Calu3 (cell line): ENCODE measurements at regions of chr12 and their contacts with region 1.

Region 1: GRCh38 chr12:38053655-38054464 is 262.7 kb upstream of the ALG10B start:
- DNase-seq: peak; percentile 85
- H3K4me3 Mint-ChIP-seq: peak overlapping the region; percentile 19
- H3K27ac Mint-ChIP-seq: no peak overlapping the region
- H3K4me1 Mint-ChIP-seq: peaks cover 18% of the 10 kb centered on the region
- H3K27me3 Mint-ChIP-seq: no peaks in the 10 kb centered on the region
- CTCF ChIP-seq: peak; percentile 67

Region 2: DNA sequence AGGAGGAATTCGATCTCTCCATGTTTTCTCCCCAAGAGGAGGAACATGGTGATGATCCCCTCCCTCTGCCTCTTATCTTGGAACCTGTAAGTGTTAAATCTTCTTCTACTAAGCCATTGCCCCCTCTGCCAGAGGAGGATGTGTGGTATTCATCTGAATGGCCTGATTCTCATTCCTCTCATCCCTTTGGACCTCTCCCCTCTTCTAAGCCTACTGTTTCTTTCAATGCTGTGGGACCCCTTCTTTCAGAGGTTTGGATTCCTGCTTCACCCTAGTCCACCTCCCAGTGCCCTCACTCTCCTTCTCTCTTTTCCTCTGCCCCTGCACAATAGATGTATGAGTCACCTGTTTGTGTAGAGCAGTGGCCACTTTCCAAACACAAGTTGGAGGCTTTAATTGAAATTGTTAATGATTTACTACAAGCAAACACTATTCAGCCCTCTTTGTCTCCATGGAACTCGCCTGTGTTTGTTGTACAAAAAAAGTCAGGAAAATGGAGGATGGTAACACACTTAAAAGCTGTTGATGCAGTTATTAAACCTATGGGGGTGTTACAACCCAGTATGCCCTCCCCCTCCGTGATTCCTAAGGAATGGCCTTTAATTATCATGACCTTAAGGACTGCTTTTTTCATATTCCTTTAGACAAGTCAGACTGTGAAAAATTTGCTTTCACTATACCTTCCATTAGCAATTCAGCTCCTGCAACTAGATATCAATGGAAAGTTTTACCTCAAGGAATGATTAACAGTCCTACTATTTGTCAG is 70.6 kb after region 1 on chr12:
- CTCF ChIA-PET with region 1: interaction called, 5 read pairs
- intact Hi-C with region 1: loop called (anchors 5 kb)
- DNase-seq: peak; percentile 46
- H3K4me3 Mint-ChIP-seq: peak overlapping the region; percentile 51
- H3K27ac Mint-ChIP-seq: peak overlapping the region; percentile 94
- H3K4me1 Mint-ChIP-seq: peaks cover 29% of the 10 kb centered on the region
- H3K27me3 Mint-ChIP-seq: no peaks in the 10 kb centered on the region
- CTCF ChIP-seq: no peak

Region 3: DNA sequence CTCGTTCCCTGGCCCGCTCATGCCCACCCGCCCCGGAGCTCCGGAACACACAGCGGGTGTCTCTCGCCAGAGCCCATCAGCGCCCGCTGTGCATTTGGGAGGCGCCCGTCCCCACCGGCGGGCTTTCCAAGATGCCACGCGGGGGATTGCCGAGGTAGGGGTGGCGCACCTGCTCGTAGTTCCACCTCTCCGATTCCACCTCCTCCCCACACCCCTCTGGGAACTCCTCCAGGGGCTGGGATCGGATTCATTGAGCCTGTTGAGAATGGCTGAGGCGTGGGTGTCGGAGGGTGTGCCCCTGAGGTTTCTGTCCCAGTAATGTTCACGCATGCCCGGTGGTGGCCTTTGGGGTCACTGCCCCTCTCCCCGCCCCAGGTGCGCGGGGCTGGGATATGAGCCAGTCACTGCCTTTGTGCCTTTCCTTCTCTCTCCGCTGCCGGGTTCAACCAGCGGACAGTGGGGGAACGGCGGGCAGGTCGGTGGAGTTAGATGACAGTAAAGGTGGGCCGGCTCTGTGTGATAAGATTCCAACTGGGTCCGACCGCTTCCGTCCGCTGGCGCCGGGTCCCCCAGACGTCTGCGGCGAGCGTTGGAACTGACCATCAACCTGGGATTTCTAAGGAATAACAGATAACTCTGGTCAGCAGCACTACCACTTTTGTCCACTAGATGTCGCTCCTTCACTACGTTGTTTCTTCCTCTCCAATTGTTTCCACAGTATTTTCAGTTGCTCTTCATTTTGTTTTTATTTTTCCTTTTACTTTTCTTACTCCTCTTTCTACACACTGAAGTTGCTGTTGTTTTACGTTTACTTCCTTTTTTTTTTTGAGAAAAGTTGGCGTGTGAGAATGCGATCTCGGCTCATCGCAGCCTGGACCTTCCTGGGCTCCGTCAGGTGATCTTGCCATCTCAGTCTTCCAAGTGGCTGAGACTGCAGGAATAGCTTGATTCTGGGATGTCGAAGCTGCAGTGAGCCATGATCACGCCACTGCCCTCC is 84.7 kb after region 1 on chr12:
- CTCF ChIA-PET with region 1: interaction called, 3 read pairs
- intact Hi-C with region 1: loop called (anchors 2 kb)
- DNase-seq: peak; percentile 80
- H3K4me3 Mint-ChIP-seq: peak overlapping the region; percentile 68
- H3K27ac Mint-ChIP-seq: peak overlapping the region; percentile 67
- H3K4me1 Mint-ChIP-seq: peaks cover 10% of the 10 kb centered on the region
- H3K27me3 Mint-ChIP-seq: no peaks in the 10 kb centered on the region
- CTCF ChIP-seq: peak; percentile 57

Region 4: DNA sequence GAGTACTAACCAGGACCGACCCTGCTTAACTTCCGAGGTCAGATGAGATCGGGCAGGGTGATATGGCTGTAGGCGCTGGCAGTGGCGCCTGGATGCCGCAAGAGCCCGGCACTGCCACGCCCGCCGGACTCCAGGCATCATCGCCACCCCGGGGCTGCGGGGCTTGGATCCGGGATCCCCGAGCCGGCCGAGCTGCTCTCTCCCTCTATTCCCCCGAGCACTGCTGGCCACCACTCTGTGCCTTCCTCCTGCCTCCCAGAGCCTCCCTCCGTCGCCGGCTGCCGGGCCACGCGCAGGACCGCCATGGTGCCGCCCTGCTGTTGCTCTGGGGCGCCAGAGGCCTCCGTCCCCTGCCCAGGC is 109.6 kb after region 1 on chr12:
- CTCF ChIA-PET with region 1: no interaction called
- intact Hi-C with region 1: no loop called
- DNase-seq: no peak
- H3K4me3 Mint-ChIP-seq: no peak overlapping the region
- H3K27ac Mint-ChIP-seq: no peak overlapping the region
- H3K4me1 Mint-ChIP-seq: no peaks in the 10 kb centered on the region
- H3K27me3 Mint-ChIP-seq: no peaks in the 10 kb centered on the region
- CTCF ChIP-seq: no peak

Region 5: GRCh38 chr12:38316391-38317129 is 262.7 kb after region 1 on chr12 and contains the start of gene ALG10B:
- CTCF ChIA-PET with region 1: no interaction called
- intact Hi-C with region 1: loop called (anchors 1 kb)
- DNase-seq: peak; percentile 89
- H3K4me3 Mint-ChIP-seq: peak within 1 kb of the TSS; percentile 86
- H3K27ac Mint-ChIP-seq: peak within 1 kb of the TSS; percentile 86
- H3K4me1 Mint-ChIP-seq: peaks cover 21% of the 10 kb centered on the region
- H3K27me3 Mint-ChIP-seq: no peaks in the 10 kb centered on the region
- CTCF ChIP-seq: no peak
- total RNA-seq, gene ALG10B: 11.2 and 12.6 TPM in 2 replicates

Region 6: GRCh38 chr12:38906482-38907170 is 852.8 kb after region 1 on chr12:
- CTCF ChIA-PET with region 1: no interaction called
- intact Hi-C with region 1: loop called (anchors 10 kb)
- DNase-seq: peak; percentile 88
- H3K4me3 Mint-ChIP-seq: peak overlapping the region; percentile 90
- H3K27ac Mint-ChIP-seq: peak overlapping the region; percentile 72
- H3K4me1 Mint-ChIP-seq: peaks cover 8% of the 10 kb centered on the region
- H3K27me3 Mint-ChIP-seq: no peaks in the 10 kb centered on the region
- CTCF ChIP-seq: peak; percentile 65

Region 7: GRCh38 chr12:39103552-39104165 is 1049.8 kb after region 1 on chr12:
- CTCF ChIA-PET with region 1: no interaction called
- intact Hi-C with region 1: loop called (anchors 10 kb)
- DNase-seq: peak; percentile 40
- H3K4me3 Mint-ChIP-seq: no peak overlapping the region
- H3K27ac Mint-ChIP-seq: no peak overlapping the region
- H3K4me1 Mint-ChIP-seq: peaks cover 15% of the 10 kb centered on the region
- H3K27me3 Mint-ChIP-seq: no peaks in the 10 kb centered on the region
- CTCF ChIP-seq: peak; percentile 41